H1 (cell line): ENCODE measurements at regions of chr1 and their contacts with region 1.

Region 1: GRCh38 chr1:214632091-214632490 is 29.1 kb downstream of the CENPF start:
- DNase-seq: no peak
- H3K4me3 ChIP-seq: no peak overlapping the region
- H3K27ac ChIP-seq: no peak overlapping the region
- H3K4me1 ChIP-seq: no peaks in the 10 kb centered on the region
- H3K27me3 ChIP-seq: no peaks in the 10 kb centered on the region
- CTCF ChIP-seq: no peak
- EP300 ChIP-seq: no peak
- POLR2A ChIP-seq: no peak
- RAD21 ChIP-seq: no peak

Region 2: GRCh38 chr1:214492401-214493075 is 139.6 kb before region 1 on chr1:
- CTCF ChIA-PET with region 1: no interaction called
- POLR2A ChIA-PET with region 1: no interaction called
- DNase-seq: no peak
- H3K4me3 ChIP-seq: no peak overlapping the region
- H3K27ac ChIP-seq: no peak overlapping the region
- H3K4me1 ChIP-seq: peaks cover 0 to 6% (median under 1%) of the 10 kb centered on the region in 4 experiments; a peak in 1 of 7 replicates
- H3K27me3 ChIP-seq: no peaks in the 10 kb centered on the region
- CTCF ChIP-seq: no peak
- EP300 ChIP-seq: no peak
- POLR2A ChIP-seq: no peak
- RAD21 ChIP-seq: no peak

Region 3: DNA sequence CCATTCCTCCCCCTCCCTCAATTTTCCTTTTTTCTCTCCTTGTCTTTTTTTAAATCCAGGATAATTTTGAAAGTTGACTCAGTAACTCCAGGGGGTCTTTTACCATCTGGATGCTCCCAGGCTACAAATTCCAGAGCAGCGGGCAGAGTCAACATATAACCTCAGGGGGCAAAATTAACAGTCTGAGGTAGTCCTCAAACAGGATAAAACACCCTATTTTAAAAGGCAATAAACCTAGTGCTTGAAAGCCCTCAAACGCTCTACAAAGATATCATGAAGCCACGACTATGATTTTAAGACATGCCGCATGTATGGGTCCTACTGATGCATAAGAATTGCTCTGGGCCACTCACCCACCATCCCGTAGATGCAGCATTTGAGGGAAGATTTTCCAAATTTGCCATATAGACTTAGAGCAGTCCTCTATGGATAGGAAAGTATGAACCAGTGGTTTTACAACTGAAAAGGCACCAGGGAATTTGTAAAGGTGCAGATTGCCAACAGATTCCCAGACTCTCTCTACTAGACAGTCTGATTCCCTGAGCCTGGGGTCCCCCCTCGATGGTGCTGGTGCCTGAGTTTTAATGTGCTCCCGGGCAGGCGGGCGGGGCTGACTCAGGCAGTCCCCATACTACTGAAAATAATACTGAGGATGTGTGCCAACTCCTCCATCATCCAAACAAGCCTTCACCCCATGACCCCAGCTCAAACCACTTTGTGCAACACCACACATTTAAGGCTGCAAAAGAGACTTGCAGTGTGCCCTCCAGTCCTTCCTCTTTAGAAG is 117.9 kb before region 1 on chr1:
- CTCF ChIA-PET with region 1: no interaction called
- POLR2A ChIA-PET with region 1: no interaction called
- DNase-seq: no peak
- H3K4me3 ChIP-seq: peak overlapping the region in 1 of 4 experiments; percentile 39; a peak in 3 of 8 replicates
- H3K27ac ChIP-seq: no peak overlapping the region
- H3K4me1 ChIP-seq: peaks cover 5 to 20% (median 12%) of the 10 kb centered on the region in 4 experiments; a peak in 6 of 7 replicates
- H3K27me3 ChIP-seq: peaks cover 0 to 6% (median 2%) of the 10 kb centered on the region in 4 experiments; a peak in 3 of 7 replicates
- CTCF ChIP-seq: no peak
- EP300 ChIP-seq: no peak
- POLR2A ChIP-seq: no peak
- RAD21 ChIP-seq: no peak

Region 4: DNA sequence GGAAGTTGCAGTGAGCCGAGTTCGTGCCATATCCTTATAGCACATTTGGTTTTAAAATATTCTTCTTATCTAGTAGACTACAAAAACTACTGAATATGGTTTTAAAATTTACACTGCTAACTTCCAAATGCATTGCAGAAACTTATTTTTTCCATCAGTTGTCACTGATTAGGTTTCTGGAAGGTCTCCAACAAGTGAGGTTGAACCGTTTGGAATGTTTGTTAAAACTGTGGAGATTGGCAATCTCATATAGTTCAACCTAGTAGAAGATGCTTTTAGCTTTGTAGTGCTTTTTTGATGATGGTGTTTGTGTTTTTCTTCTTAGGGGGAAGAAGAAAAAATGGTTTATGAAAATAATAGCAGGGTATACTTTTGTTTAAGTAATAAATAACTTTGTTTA is 16.2 kb before region 1 on chr1:
- CTCF ChIA-PET with region 1: interaction called, 17 read pairs
- POLR2A ChIA-PET with region 1: no interaction called
- DNase-seq: no peak
- H3K4me3 ChIP-seq: no peak overlapping the region
- H3K27ac ChIP-seq: no peak overlapping the region
- H3K4me1 ChIP-seq: no peaks in the 10 kb centered on the region
- H3K27me3 ChIP-seq: no peaks in the 10 kb centered on the region
- CTCF ChIP-seq: no peak
- EP300 ChIP-seq: no peak
- POLR2A ChIP-seq: no peak
- RAD21 ChIP-seq: no peak